ENCODE measurements at regions of chr1 and their contacts with region 1.

Region 1: DNA sequence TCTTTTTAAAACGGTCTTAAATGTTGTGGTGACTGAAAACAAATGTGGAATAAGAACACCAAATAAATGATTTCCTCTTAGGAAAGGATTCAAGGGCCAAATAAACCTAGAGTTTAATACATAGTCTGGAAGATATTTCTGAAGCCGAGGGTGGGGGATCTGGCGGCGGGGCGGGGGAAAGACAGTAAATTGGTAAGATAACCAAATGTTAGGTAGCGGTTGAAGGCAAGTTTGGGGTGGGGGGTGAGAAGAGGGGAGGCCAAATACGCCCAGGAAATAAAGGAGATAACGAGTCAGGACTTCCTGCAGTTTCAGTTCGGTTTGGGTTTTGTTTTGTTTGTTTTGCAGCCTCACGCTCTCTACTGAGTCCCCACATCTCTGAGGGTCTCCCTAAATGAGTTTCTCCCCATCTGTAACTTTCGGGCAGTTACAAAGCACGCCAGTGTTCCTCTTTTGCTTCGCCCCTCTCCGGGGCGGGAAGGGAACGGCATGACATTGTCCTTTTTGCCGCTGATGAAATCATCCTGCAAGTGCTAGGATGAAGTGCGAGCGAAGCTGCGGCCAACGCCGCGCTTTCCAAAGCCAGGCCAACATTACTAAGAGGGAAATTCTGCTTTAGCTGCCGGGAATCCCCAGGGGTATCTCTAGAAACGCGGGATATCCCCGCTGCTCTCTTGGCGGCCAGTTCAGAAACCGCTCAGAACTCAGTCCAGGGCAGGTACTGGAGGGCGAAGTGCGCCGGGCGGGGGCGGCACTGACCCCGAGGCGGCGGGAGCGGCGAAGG is 844 bp downstream of the NIBAN1 start:
- DNase-seq: peak; percentile 89

Region 2: DNA sequence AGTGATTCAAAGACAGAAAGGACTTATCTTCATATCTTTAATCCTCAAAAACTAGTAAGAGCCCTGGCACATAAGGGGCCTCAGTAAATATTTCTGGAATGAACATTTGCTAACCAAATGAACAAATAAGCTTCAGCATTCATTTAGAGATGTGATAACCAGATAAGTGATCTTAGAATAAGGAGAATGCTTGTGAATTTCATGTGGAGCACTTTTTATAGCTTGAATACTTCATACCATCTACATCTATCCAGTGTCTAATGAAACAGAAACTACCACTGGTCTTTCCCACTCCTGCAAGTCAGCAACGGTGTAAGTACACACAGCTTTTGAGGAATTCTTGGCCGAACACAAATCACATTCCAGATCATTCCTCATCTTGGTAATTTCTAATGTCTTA is 257.3 kb before region 1 on chr1:
- intact Hi-C with region 1: no loop called
- DNase-seq: no peak

Region 3: GRCh38 chr1:184881941-184882913 is 91.2 kb before region 1 on chr1:
- intact Hi-C with region 1: loop called (anchors 2 kb)
- DNase-seq: no peak